HEK293 (cell line): ENCODE measurements at regions of chr10 and their contacts with region 1.

Region 1: DNA sequence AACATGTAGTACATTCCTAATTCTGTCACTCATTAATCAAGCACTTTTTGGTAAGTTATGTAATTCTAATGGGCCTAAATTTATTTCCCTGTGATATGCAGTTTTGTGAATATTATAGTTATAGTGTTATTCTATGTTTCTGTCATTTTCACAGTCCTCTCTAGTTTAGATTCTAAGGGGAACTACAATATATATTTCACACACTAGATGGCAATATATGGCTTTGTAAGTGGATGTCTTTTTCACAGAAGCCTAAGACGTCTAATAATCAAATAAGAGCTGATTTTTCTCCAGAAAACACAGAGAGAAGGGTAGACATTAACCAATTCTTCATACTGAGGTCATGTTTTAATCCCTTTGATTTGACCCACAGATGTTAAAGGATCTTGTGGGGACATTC is 18.0 kb downstream of the RNLS start:
- H3K4me3 ChIP-seq: no peak overlapping the region
- H3K27ac ChIP-seq: no peak overlapping the region
- H3K4me1 ChIP-seq: no peaks in the 10 kb centered on the region
- CTCF ChIP-seq: no peak; the same call in 1 of the 2 replicates

Region 2: GRCh38 chr10:88421590-88421989 is 143.5 kb before region 1 on chr10:
- CTCF ChIA-PET with region 1: interaction called, 11 read pairs
- POLR2A ChIA-PET with region 1: no interaction called
- H3K4me3 ChIP-seq: no peak overlapping the region
- H3K27ac ChIP-seq: no peak overlapping the region
- H3K4me1 ChIP-seq: peaks cover 3% of the 10 kb centered on the region
- CTCF ChIP-seq: no peak

Region 3: GRCh38 chr10:88553116-88553752 is 11.8 kb before region 1 on chr10:
- CTCF ChIA-PET with region 1: interaction called, 28 read pairs
- POLR2A ChIA-PET with region 1: no interaction called
- H3K4me3 ChIP-seq: no peak overlapping the region
- H3K27ac ChIP-seq: no peak overlapping the region
- H3K4me1 ChIP-seq: no peaks in the 10 kb centered on the region
- CTCF ChIP-seq: 0 out of 2 replicates have a peak, but pooled peaks have one; percentile 41